Activated T-helper 2 cell treated with anti-CD3 and anti-CD28 coated beads, Interferon-gamma antibody, Interleukin-2, Interleukin-4, amounts not matched to agents 10 μg/mL and 5 μg/mL and 100 μg/mL, durations not matched to agents 14 hours and 24 hours and 36 hours (primary cell): ENCODE measurements at regions of chr13 and their contacts with region 1.

Region 1: GRCh38 chr13:60689571-60689970 is 292.6 kb downstream of the TDRD3 start:
- DNase-seq: no peak
- H3K4me3 Mint-ChIP-seq: peak overlapping the region; percentile 42
- H3K27ac Mint-ChIP-seq: peak overlapping the region; percentile 78
- H3K4me1 Mint-ChIP-seq: peaks cover 24% of the 10 kb centered on the region
- H3K27me3 Mint-ChIP-seq: no peaks in the 10 kb centered on the region

Region 2: GRCh38 chr13:60645552-60646138 is 43.9 kb before region 1 on chr13:
- intact Hi-C with region 1: no loop called
- DNase-seq: no peak
- H3K4me3 Mint-ChIP-seq: no peak overlapping the region
- H3K27ac Mint-ChIP-seq: no peak overlapping the region
- H3K4me1 Mint-ChIP-seq: no peaks in the 10 kb centered on the region
- H3K27me3 Mint-ChIP-seq: no peaks in the 10 kb centered on the region

Region 3: DNA sequence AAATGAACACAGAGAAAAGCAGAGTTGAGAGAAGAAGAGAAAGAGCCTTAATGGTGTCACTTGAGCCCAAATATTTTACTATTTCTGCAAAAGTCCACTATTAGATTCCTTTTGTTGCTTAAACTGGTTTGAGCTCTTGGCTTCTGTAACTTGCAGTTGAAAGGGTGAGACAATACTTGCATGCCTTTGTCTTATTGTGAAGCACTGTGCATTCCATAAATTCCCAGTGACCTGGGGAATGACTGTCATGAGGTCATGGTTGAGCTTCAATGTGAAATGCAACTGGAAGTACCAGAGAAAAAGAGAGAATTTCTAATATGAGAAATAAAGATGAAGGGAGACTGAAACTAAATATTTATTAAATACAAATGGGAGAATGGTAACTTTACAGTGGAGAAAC is 18.3 kb after region 1 on chr13:
- intact Hi-C with region 1: no loop called
- DNase-seq: no peak
- H3K4me3 Mint-ChIP-seq: no peak overlapping the region
- H3K27ac Mint-ChIP-seq: no peak overlapping the region
- H3K4me1 Mint-ChIP-seq: no peaks in the 10 kb centered on the region
- H3K27me3 Mint-ChIP-seq: no peaks in the 10 kb centered on the region

Region 4: GRCh38 chr13:60765700-60766411 is 76.3 kb after region 1 on chr13:
- intact Hi-C with region 1: loop called (anchors 1 kb)
- DNase-seq: no peak
- H3K4me3 Mint-ChIP-seq: no peak overlapping the region
- H3K27ac Mint-ChIP-seq: peak overlapping the region; percentile 17
- H3K4me1 Mint-ChIP-seq: peaks cover 2% of the 10 kb centered on the region
- H3K27me3 Mint-ChIP-seq: no peaks in the 10 kb centered on the region